Head of caudate nucleus (tissue), 42 donors: ENCODE measurements at regions of chr5 and their contacts with region 1.

Region 1: GRCh38 chr5:79020861-79021561 is 35.9 kb upstream of the ARSB start:
- DNase-seq: peak; percentile 26 to 86 (median 68)

Region 2: GRCh38 chr5:79109527-79110492 is 88.8 kb after region 1 on chr5:
- intact Hi-C with region 1: no loop called
- DNase-seq: peak in 8 of 42 donors; percentile 4 to 30 (median 8)

Region 3: DNA sequence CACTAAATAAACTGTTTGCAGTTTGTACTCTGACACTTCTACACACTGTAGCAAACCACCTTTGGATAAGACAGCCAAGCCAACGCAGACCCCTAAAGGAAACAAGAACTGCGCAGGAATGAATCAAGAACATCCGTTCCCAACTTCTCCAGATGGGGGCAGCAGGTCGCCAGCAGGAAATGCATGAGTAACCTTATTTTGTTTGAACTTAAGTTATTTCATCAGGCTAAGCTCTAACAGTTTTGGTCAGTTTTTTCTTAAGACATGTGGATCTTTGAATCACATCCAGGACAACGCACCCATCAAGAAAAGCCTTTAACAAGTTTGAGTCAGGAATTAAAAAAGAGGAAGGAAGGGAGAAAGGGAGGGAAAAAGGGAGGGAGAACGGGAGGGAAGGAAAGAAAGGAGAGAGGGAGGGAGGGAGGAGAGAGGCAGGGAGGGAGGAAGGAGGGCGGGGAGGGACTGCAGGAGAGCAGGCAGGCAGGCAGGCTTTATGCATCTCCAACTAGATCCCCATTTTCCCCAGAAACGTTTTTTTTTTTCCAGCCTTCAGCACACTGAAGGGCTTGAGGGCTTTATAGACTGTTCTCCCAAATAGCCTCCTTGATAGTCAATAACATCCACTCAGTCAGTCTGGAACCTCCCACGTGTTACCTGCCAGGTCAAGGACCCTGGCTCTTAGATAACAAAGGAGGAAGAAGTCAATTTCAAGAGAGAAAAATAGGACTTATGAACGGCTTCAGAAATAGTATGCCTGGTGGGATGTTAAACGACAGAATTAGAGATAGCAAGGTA is 112.8 kb after region 1 on chr5:
- intact Hi-C with region 1: loop called (anchors 2 kb)
- DNase-seq: peak; percentile 38 to 86 (median 68)

Region 4: GRCh38 chr5:79456890-79457583 is 436.0 kb after region 1 on chr5:
- intact Hi-C with region 1: loop called (anchors 10 kb)
- DNase-seq: no peak

Region 5: DNA sequence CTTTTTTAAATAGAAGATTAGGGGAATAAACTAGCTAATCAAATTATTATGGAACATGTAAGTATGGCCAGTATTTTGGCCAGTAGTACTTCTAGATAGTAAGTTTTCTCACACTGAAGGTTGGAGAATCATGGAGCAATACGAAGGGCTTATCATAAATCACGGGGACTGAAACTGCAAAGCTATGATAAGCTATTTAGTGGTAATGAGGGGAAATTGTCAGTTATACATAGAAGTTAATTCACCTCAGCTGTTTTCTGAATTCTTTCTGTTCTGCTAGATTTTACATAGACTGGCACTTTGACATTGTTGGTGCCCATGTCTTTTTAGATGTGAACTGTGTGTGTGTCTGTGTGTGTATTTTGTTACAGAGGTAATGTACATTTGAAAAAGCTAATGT is 1432.4 kb after region 1 on chr5:
- intact Hi-C with region 1: no loop called
- DNase-seq: no peak